Dendritic cell treated with granulocyte-macrophage colony-stimulating factor and Interleukin-4, amounts not matched to agents 40 ng/mL and 50 ng/mL, for 4 days (primary cell): ENCODE measurements at regions of chr2 and their contacts with region 1.

Region 1: DNA sequence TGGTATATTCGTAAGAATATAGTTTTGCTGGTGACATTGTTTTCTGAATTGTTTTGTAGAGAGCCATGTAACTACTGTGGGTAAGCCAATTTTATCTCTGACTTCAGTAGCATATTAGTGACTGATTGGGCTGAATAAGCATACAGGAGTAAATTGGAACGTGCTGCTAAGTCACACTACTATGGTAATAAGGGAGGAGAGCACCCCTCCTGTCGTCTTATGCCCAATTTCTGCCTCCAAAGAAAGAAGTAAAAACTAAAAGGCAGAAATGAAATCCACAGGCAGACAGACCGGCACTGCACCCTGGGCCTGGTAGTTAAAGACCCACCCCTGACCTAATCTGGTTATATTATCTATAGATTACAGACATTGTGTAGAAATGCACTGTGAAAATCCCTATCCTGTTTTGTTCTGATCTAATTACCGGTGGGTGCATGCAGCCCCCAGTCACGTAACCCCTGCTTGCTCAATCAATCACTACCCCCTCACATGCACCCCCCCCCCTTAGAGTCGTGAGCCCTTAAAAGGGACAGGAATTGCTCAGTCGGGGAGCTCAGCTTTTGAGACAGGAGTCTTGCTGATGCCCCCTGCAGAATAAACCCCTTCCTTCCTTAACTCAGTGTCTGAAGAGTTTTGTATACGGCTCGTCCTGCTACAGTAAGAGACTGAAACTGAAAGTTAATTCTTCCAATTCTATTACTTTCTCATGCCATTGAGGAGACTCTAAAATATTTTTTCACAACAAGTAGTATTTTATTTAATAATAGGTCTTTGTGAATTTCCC is 167.0 kb downstream of the ZNF804A start:
- H3K4me3 Mint-ChIP-seq: peak overlapping the region; percentile 79
- H3K27ac Mint-ChIP-seq: peak overlapping the region; percentile 88
- H3K4me1 Mint-ChIP-seq: peaks cover 17% of the 10 kb centered on the region
- H3K27me3 Mint-ChIP-seq: no peaks in the 10 kb centered on the region

Region 2: DNA sequence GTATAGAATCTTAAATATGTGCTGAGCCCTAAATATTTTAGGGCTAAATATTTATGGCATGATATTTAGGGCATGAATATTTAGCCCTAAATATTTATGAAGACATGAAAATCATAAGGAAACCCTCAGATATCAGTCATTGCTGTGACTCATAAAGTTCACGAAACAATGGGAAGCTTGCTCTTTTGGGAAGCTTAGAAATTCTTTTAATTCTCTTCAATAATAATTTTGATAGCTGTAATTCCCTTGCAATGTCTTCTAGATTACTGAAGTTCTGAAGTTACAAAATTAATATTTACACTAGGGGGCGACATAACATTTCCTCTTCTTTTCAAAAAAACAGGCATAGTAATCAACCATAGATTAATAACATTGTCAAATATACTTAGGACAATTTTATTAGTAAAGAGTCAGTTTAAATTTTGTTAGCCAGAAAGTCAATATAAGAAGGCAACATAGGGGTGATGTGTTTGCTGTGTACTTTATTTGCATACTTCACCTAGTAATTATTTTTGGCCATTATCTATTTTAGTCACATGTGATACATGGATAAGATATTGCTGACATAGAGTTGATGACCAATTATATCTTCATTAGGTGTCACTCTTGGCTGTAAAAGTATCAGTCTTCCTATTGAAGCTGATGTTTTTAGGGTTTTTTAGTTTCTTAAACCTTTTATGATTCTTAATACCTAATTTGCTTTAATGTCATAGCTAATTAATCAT is 153.8 kb before region 1 on chr2:
- intact Hi-C with region 1: loop called (anchors 10 kb)
- H3K4me3 Mint-ChIP-seq: no peak overlapping the region
- H3K27ac Mint-ChIP-seq: no peak overlapping the region
- H3K4me1 Mint-ChIP-seq: peaks cover 18% of the 10 kb centered on the region
- H3K27me3 Mint-ChIP-seq: no peaks in the 10 kb centered on the region

Region 3: GRCh38 chr2:185456517-185456916 is 691.2 kb after region 1 on chr2:
- intact Hi-C with region 1: no loop called
- H3K4me3 Mint-ChIP-seq: no peak overlapping the region
- H3K27ac Mint-ChIP-seq: no peak overlapping the region
- H3K4me1 Mint-ChIP-seq: no peaks in the 10 kb centered on the region
- H3K27me3 Mint-ChIP-seq: no peaks in the 10 kb centered on the region